ENCODE measurements at regions of chr11 and their contacts with region 1.

Region 1: GRCh38 chr11:128391811-128392210 is 195.5 kb downstream of the ETS1 start:
- DNase-seq: no peak
- ATAC-seq: no peak
- H3K4me3 ChIP-seq: no peak overlapping the region
- H3K27ac ChIP-seq: no peak overlapping the region
- H3K4me1 ChIP-seq: no peaks in the 10 kb centered on the region
- H3K27me3 ChIP-seq: no peaks in the 10 kb centered on the region; a peak in 1 of 5 replicates
- CTCF ChIP-seq: no peak
- EP300 ChIP-seq: no peak
- POLR2A ChIP-seq: no peak
- RAD21 ChIP-seq: no peak

Region 2: DNA sequence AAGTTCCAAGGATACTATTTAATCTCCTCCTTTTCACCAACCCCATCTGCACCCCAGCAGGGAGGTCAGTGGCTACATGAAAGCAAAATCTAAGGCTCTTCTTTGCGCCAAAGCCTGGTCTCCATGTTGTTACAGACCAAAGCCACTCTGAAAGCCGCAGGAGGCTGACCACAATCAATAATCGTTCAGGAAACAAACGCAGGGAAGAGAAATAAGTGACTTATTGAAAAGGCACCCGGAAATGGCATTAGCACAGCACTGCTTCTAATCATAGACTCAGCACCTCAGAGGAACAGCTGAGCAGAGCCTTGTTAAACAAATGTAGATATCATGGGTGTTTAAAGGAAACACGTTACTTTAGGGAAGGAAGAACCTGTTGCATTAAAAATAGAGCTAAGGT is 1575.2 kb before region 1 on chr11:
- CTCF ChIA-PET with region 1: no interaction called
- POLR2A ChIA-PET with region 1: no interaction called
- in situ Hi-C with region 1: no loop called
- intact Hi-C with region 1: no loop called
- DNase-seq: no peak
- ATAC-seq: no peak
- H3K4me3 ChIP-seq: no peak overlapping the region
- H3K27ac ChIP-seq: no peak overlapping the region
- H3K4me1 ChIP-seq: no peaks in the 10 kb centered on the region
- H3K27me3 ChIP-seq: peaks cover 0 to 25% of the 10 kb centered on the region in 2 experiments; a peak in 2 of 5 replicates
- CTCF ChIP-seq: no peak
- EP300 ChIP-seq: no peak
- POLR2A ChIP-seq: no peak
- RAD21 ChIP-seq: no peak

Region 3: GRCh38 chr11:128372977-128373376 is 18.8 kb before region 1 on chr11:
- CTCF ChIA-PET with region 1: no interaction called
- POLR2A ChIA-PET with region 1: no interaction called
- in situ Hi-C with region 1: no loop called
- intact Hi-C with region 1: loop called (anchors 2 kb)
- DNase-seq: no peak
- ATAC-seq: no peak
- H3K4me3 ChIP-seq: no peak overlapping the region
- H3K27ac ChIP-seq: no peak overlapping the region
- H3K4me1 ChIP-seq: no peaks in the 10 kb centered on the region
- H3K27me3 ChIP-seq: no peaks in the 10 kb centered on the region
- CTCF ChIP-seq: no peak
- EP300 ChIP-seq: no peak
- POLR2A ChIP-seq: no peak
- RAD21 ChIP-seq: no peak

Measured in HepG2 (cell line).